ENCODE measurements at regions of chr4 and their contacts with region 1.

Region 1: GRCh38 chr4:40199999-40200874 is 3.4 kb downstream of the RHOH start:
- DNase-seq: peak in 10 of 14 experiments; percentile 31 to 90 (median 50)
- ATAC-seq: peak; percentile 18
- H3K4me3 ChIP-seq: peak overlapping the region; percentile 74
- H3K4me3 Mint-ChIP-seq: peak overlapping the region; percentile 100
- H3K27ac ChIP-seq: peak overlapping the region; percentile 93 to 99
- H3K27ac Mint-ChIP-seq: peak overlapping the region; percentile 99
- H3K4me1 ChIP-seq: peaks cover 33% of the 10 kb centered on the region
- H3K4me1 Mint-ChIP-seq: peaks cover 46% of the 10 kb centered on the region
- H3K27me3 ChIP-seq: no peaks in the 10 kb centered on the region
- H3K27me3 Mint-ChIP-seq: no peaks in the 10 kb centered on the region
- CTCF ChIP-seq: no peak

Region 2: DNA sequence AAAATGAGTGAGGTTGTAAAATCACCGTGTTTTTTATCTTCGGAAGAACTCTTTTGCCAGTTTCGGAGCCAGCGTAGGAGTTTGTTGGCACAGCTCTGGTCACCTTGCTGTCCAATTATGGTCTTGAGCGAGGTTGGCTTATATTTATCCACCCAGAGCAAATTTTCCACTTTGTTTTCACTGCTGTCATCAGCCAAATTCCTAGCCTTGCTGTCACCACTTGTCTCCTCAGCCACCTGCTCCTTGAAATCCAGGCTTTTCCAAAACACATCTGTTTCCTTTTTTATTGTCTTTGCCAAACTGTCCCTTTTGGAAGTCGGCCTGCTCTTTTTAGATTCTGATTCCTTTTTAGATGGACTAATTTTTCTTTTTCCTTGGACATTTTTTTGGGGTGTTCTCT is 891.6 kb before region 1 on chr4:
- CTCF ChIA-PET with region 1: no interaction called
- POLR2A ChIA-PET with region 1: no interaction called
- intact Hi-C with region 1: no loop called
- DNase-seq: no peak
- ATAC-seq: no peak
- H3K4me3 ChIP-seq: no peak overlapping the region
- H3K4me3 Mint-ChIP-seq: no peak overlapping the region
- H3K27ac ChIP-seq: no peak overlapping the region
- H3K27ac Mint-ChIP-seq: no peak overlapping the region
- H3K4me1 ChIP-seq: no peaks in the 10 kb centered on the region
- H3K4me1 Mint-ChIP-seq: no peaks in the 10 kb centered on the region
- H3K27me3 ChIP-seq: no peaks in the 10 kb centered on the region
- H3K27me3 Mint-ChIP-seq: no peaks in the 10 kb centered on the region
- CTCF ChIP-seq: no peak

Region 3: GRCh38 chr4:40185830-40186664 is 14.2 kb before region 1 on chr4:
- CTCF ChIA-PET with region 1: no interaction called
- POLR2A ChIA-PET with region 1: interaction called, 35 read pairs
- intact Hi-C with region 1: no loop called
- DNase-seq: no peak
- ATAC-seq: no peak
- H3K4me3 ChIP-seq: no peak overlapping the region
- H3K4me3 Mint-ChIP-seq: no peak overlapping the region
- H3K27ac ChIP-seq: no peak overlapping the region
- H3K27ac Mint-ChIP-seq: peak overlapping the region; percentile 15
- H3K4me1 ChIP-seq: peaks cover 16% of the 10 kb centered on the region
- H3K4me1 Mint-ChIP-seq: peaks cover 63% of the 10 kb centered on the region
- H3K27me3 ChIP-seq: no peaks in the 10 kb centered on the region
- H3K27me3 Mint-ChIP-seq: no peaks in the 10 kb centered on the region
- CTCF ChIP-seq: no peak

Region 4: GRCh38 chr4:40212674-40213527 is 12.7 kb after region 1 on chr4:
- CTCF ChIA-PET with region 1: interaction called, 7 read pairs
- POLR2A ChIA-PET with region 1: interaction called, 112 read pairs
- intact Hi-C with region 1: loop called in 1 of 2 experiments (anchors 1 kb)
- DNase-seq: peak in 1 of 14 experiments; percentile 26
- ATAC-seq: no peak
- H3K4me3 ChIP-seq: peak overlapping the region; percentile 25
- H3K4me3 Mint-ChIP-seq: peak overlapping the region; percentile 71
- H3K27ac ChIP-seq: peak overlapping the region; percentile 73 to 85
- H3K27ac Mint-ChIP-seq: peak overlapping the region; percentile 99
- H3K4me1 ChIP-seq: peaks cover 74% of the 10 kb centered on the region
- H3K4me1 Mint-ChIP-seq: peaks cover 94% of the 10 kb centered on the region
- H3K27me3 ChIP-seq: no peaks in the 10 kb centered on the region
- H3K27me3 Mint-ChIP-seq: no peaks in the 10 kb centered on the region
- CTCF ChIP-seq: no peak

Region 5: DNA sequence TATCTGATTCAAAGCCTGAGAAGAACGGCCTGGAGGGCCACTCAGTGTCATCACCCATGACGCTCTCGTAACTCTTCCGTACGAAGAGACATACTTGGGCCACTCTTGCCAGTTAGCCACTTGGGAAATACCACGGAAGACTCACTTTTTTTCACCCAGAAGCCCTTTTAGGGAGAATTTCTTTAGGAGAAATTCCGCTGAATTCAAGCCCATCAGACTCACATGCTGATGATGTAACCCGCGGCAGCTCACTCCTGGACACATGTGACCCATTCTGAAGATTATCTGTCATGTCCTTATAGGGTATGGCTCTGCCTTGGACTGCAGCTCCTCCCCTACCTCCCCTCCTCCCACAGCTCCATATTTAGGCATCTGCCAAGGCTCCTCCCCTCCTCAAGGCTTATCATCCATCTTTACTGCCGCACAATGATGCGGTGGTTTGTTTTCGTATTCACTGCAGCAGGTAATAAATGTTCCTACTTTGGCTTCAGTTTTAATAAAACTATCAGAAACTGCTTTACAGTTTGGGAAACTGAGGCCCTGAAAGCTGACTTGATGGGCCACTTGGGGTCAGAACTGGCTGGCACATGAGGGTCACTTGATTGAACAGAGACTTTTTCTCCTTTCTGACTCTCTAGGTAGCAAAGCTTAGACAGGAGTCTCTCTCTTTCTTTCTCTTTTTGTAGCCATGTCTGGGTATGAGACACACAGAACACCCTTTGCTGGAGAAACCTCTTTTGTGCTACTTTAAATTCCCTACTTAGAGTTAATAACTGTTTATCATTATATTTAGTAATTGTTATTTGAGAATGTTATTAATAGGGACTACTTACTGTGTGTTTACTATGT is 38.7 kb after region 1 on chr4:
- CTCF ChIA-PET with region 1: interaction called, 3 read pairs
- POLR2A ChIA-PET with region 1: interaction called, 64 read pairs
- intact Hi-C with region 1: loop called (anchors 2 to 5 kb)
- DNase-seq: peak; percentile 50 to 95 (median 69)
- ATAC-seq: peak; percentile 93
- H3K4me3 ChIP-seq: peak overlapping the region; percentile 46
- H3K4me3 Mint-ChIP-seq: peak overlapping the region; percentile 55
- H3K27ac ChIP-seq: peak overlapping the region; percentile 79 to 97
- H3K27ac Mint-ChIP-seq: peak overlapping the region; percentile 93
- H3K4me1 ChIP-seq: peaks cover 99% of the 10 kb centered on the region
- H3K4me1 Mint-ChIP-seq: peaks cover 92% of the 10 kb centered on the region
- H3K27me3 ChIP-seq: no peaks in the 10 kb centered on the region
- H3K27me3 Mint-ChIP-seq: no peaks in the 10 kb centered on the region
- CTCF ChIP-seq: no peak

Region 6: GRCh38 chr4:40247350-40247749 is 47.1 kb after region 1 on chr4:
- CTCF ChIA-PET with region 1: no interaction called
- POLR2A ChIA-PET with region 1: interaction called, 27 read pairs
- intact Hi-C with region 1: loop called in 1 of 2 experiments (anchors 5 kb)
- DNase-seq: peak; percentile 51 to 87 (median 66)
- ATAC-seq: peak; percentile 81
- H3K4me3 ChIP-seq: no peak overlapping the region
- H3K4me3 Mint-ChIP-seq: peak overlapping the region; percentile 45
- H3K27ac ChIP-seq: peak overlapping the region; percentile 71 to 72
- H3K27ac Mint-ChIP-seq: peak overlapping the region; percentile 93
- H3K4me1 ChIP-seq: peaks cover 84% of the 10 kb centered on the region
- H3K4me1 Mint-ChIP-seq: peaks cover 88% of the 10 kb centered on the region
- H3K27me3 ChIP-seq: no peaks in the 10 kb centered on the region
- H3K27me3 Mint-ChIP-seq: no peaks in the 10 kb centered on the region
- CTCF ChIP-seq: no peak

Region 7: GRCh38 chr4:40316782-40317635 is 116.8 kb after region 1 on chr4:
- CTCF ChIA-PET with region 1: interaction called, 10 read pairs
- POLR2A ChIA-PET with region 1: interaction called, 98 read pairs
- intact Hi-C with region 1: no loop called
- DNase-seq: peak in 13 of 14 experiments; percentile 34 to 88 (median 54)
- ATAC-seq: peak; percentile 67
- H3K4me3 ChIP-seq: peak overlapping the region; percentile 54
- H3K4me3 Mint-ChIP-seq: peak overlapping the region; percentile 83
- H3K27ac ChIP-seq: peak overlapping the region; percentile 69 to 80
- H3K27ac Mint-ChIP-seq: peak overlapping the region; percentile 91
- H3K4me1 ChIP-seq: peaks cover 20% of the 10 kb centered on the region
- H3K4me1 Mint-ChIP-seq: peaks cover 57% of the 10 kb centered on the region
- H3K27me3 ChIP-seq: no peaks in the 10 kb centered on the region
- H3K27me3 Mint-ChIP-seq: no peaks in the 10 kb centered on the region
- CTCF ChIP-seq: peak; percentile 86